A673 (cell line): ENCODE measurements at regions of chr11 and their contacts with region 1.

Region 1: DNA sequence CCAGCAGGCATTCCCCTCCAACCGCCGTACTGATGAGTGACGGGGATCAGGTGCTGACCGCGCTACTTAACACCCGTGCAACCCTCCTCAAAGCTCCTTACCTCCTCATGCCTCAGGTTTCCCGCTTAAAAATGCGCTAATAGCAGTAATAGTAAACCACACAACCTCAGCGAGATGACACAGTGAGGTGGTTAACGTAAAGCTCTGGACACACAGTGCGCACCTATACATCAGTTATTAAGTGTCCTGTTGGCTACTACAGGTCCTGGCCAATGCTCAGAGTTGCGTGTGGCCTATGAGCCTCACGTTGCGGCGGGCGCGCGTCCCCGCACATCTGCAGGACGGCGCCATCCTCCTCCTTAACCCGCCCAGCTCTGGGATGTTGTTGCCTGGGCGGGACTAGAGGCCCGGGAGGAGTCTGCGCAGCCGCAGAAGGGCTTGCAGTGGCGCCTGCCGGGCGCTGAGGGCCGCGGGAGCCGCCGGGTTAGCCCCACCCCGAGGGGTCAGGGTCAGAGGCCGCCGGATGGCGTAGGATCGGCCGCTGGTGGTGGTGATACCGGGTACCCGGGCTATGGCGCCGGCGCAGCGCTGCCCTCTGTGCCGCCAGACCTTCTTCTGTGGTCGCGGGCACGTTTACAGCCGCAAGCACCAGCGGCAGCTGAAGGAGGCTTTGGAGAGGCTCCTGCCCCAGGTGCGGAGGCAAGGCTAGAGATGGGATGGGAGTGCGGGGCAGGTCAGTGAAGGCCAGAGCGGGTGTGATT is at the start of gene CENATAC:
- DNase-seq: peak; percentile 96
- H3K4me3 ChIP-seq: peak within 1 kb of the TSS; percentile 79
- H3K27ac ChIP-seq: peak within 1 kb of the TSS; percentile 67
- H3K4me1 ChIP-seq: peaks cover 14% of the 10 kb centered on the region
- H3K27me3 ChIP-seq: no peaks in the 10 kb centered on the region
- CTCF ChIP-seq: 0 out of 2 replicates have a peak, but pooled peaks have one; percentile 16
- total RNA-seq, gene CENATAC: 56.7 and 57.4 TPM in 2 replicates

Region 2: GRCh38 chr11:118659314-118659952 is 338.4 kb before region 1 on chr11:
- CTCF ChIA-PET with region 1: no interaction called
- POLR2A ChIA-PET with region 1: interaction called, 12 read pairs
- intact Hi-C with region 1: no loop called
- DNase-seq: peak; percentile 95
- H3K4me3 ChIP-seq: no peak overlapping the region
- H3K27ac ChIP-seq: no peak overlapping the region
- H3K4me1 ChIP-seq: no peaks in the 10 kb centered on the region
- H3K27me3 ChIP-seq: no peaks in the 10 kb centered on the region
- CTCF ChIP-seq: peak; percentile 100

Region 3: DNA sequence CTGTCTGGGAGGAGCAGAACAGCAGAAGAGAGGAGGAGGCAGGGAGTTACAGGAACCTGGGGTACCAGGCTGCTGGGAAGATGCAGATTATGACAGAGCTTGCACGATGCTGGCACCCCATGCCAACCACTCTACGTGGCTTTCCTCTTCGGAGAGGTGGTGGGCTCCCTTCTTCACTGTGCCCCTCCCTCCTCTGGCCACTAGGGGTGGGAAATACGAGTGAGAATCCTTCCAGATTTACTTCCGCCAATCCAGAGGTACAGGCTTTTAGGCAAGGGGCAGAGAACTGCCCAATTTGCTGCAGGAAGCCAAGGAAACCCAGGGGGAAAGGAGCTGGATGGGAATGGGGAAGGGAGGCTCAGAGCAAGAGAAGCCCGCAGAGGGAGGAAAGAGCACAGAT is 46.9 kb after region 1 on chr11:
- CTCF ChIA-PET with region 1: no interaction called
- POLR2A ChIA-PET with region 1: interaction called, 25 read pairs
- intact Hi-C with region 1: no loop called
- DNase-seq: no peak
- H3K4me3 ChIP-seq: no peak overlapping the region
- H3K27ac ChIP-seq: no peak overlapping the region
- H3K4me1 ChIP-seq: no peaks in the 10 kb centered on the region
- H3K27me3 ChIP-seq: no peaks in the 10 kb centered on the region
- CTCF ChIP-seq: peak; percentile 39

Region 4: GRCh38 chr11:120601536-120601935 is 1603.7 kb after region 1 on chr11:
- CTCF ChIA-PET with region 1: no interaction called
- POLR2A ChIA-PET with region 1: no interaction called
- intact Hi-C with region 1: no loop called
- DNase-seq: peak; percentile 33
- H3K4me3 ChIP-seq: no peak overlapping the region
- H3K27ac ChIP-seq: no peak overlapping the region
- H3K4me1 ChIP-seq: peaks cover 27% of the 10 kb centered on the region
- H3K27me3 ChIP-seq: no peaks in the 10 kb centered on the region
- CTCF ChIP-seq: no peak